ENCODE measurements at regions of chr2 and their contacts with region 1.

Region 1: GRCh38 chr2:217785544-217786045 is 217.2 kb downstream of the TNS1 start:
- DNase-seq: peak; percentile 49
- ATAC-seq: peak; percentile 86
- H3K4me3 ChIP-seq: no peak overlapping the region
- H3K27ac ChIP-seq: no peak overlapping the region
- H3K4me1 ChIP-seq: peaks cover 0 to 3% of the 10 kb centered on the region in 2 experiments; a peak in 2 of 4 replicates
- H3K27me3 ChIP-seq: no peaks in the 10 kb centered on the region
- CTCF ChIP-seq: peak; percentile 92 to 97 (median 93)
- POLR2A ChIP-seq: no peak
- RAD21 ChIP-seq: peak; percentile 99

Region 2: GRCh38 chr2:217482056-217482710 is 303.4 kb before region 1 on chr2:
- CTCF ChIA-PET with region 1: no interaction called
- POLR2A ChIA-PET with region 1: no interaction called
- RAD21 ChIA-PET with region 1: no interaction called
- intact Hi-C with region 1: no loop called
- DNase-seq: no peak
- ATAC-seq: no peak
- H3K4me3 ChIP-seq: no peak overlapping the region
- H3K27ac ChIP-seq: no peak overlapping the region
- H3K4me1 ChIP-seq: no peaks in the 10 kb centered on the region
- H3K27me3 ChIP-seq: peaks cover 29% of the 10 kb centered on the region
- CTCF ChIP-seq: no peak
- POLR2A ChIP-seq: no peak
- RAD21 ChIP-seq: no peak

Region 3: DNA sequence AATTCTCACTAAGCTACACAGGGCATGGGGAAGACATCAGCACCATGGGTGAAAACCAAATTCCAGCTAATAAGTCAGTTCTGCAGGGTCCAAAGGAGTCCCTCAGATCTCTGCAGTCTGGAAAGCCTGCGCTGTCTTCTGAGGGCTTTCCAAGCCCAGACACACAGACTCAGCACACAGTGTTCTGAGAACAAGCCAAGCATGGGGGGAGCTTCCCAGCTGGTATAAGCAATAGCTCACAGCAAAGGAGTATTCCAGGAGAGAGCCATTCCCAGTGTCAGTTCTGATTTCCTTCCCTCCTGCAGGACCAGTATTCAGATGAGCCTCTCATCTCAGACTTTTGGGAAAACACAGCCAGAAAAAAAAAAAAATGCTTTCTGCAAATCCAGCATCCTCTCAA is 153.6 kb before region 1 on chr2:
- CTCF ChIA-PET with region 1: no interaction called
- POLR2A ChIA-PET with region 1: no interaction called
- RAD21 ChIA-PET with region 1: no interaction called
- intact Hi-C with region 1: no loop called
- DNase-seq: no peak
- ATAC-seq: no peak
- H3K4me3 ChIP-seq: no peak overlapping the region
- H3K27ac ChIP-seq: no peak overlapping the region
- H3K4me1 ChIP-seq: no peaks in the 10 kb centered on the region
- H3K27me3 ChIP-seq: peaks cover 56% of the 10 kb centered on the region
- CTCF ChIP-seq: no peak
- POLR2A ChIP-seq: no peak
- RAD21 ChIP-seq: no peak

Region 4: DNA sequence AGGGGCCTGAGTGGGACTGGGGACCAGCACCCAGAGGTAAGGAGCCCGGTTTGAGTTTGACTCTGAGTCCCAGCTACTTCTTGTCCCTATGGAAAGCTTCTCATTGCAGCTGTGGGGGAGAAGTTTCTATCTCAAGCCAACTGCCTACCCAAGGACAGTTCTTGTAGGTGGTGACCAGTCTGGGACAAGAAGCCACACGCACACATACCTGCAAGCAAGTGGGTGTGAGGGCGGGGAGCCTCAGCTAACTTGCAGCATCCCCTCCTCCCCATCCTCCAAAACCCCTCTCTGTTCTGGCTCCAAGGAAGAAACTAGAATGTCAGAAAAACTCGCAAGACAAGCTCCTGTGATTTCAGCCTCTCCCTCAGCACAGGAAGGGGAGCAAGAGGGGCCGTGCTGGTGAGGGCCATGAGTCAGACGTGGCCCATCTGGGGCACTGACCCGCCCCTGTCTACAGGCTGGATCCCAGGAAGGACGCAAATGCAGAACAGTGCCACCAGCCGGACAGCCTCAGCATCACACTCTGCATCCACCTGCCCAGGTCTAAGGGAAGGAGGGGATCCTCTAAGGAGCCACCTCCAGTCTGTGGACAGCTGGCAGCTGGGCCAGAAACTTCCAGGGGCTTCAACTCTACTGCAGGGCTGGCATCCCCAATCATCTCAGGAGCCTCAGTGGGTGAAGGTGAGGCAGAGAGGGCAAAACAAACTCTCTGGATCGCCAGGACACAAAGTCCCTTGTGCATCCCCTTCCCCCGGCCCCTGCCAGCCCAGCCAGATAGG is 113.8 kb after region 1 on chr2:
- CTCF ChIA-PET with region 1: interaction called, 15 read pairs
- POLR2A ChIA-PET with region 1: no interaction called
- RAD21 ChIA-PET with region 1: interaction called, 4 to 7 read pairs
- intact Hi-C with region 1: loop called (anchors 1 kb)
- DNase-seq: peak; percentile 27
- ATAC-seq: peak; percentile 99
- H3K4me3 ChIP-seq: no peak overlapping the region
- H3K27ac ChIP-seq: no peak overlapping the region
- H3K4me1 ChIP-seq: peaks cover 0 to 7% of the 10 kb centered on the region in 2 experiments; a peak in 1 of 4 replicates
- H3K27me3 ChIP-seq: no peaks in the 10 kb centered on the region
- CTCF ChIP-seq: peak; percentile 46 to 88 (median 84); a peak in 5 of 6 replicates
- POLR2A ChIP-seq: no peak
- RAD21 ChIP-seq: peak; percentile 42

Region 5: GRCh38 chr2:217993817-217994463 is 208.3 kb after region 1 on chr2:
- CTCF ChIA-PET with region 1: interaction called, 35 read pairs
- POLR2A ChIA-PET with region 1: interaction called, 3 read pairs
- RAD21 ChIA-PET with region 1: interaction called, 4 read pairs
- intact Hi-C with region 1: loop called (anchors 1 kb)
- DNase-seq: no peak
- ATAC-seq: peak; percentile 96
- H3K4me3 ChIP-seq: no peak overlapping the region
- H3K27ac ChIP-seq: no peak overlapping the region
- H3K4me1 ChIP-seq: peaks cover 14 to 28% of the 10 kb centered on the region in 2 experiments
- H3K27me3 ChIP-seq: no peaks in the 10 kb centered on the region
- CTCF ChIP-seq: peak; percentile 56 to 93 (median 88)
- POLR2A ChIP-seq: no peak
- RAD21 ChIP-seq: no peak

Region 6: DNA sequence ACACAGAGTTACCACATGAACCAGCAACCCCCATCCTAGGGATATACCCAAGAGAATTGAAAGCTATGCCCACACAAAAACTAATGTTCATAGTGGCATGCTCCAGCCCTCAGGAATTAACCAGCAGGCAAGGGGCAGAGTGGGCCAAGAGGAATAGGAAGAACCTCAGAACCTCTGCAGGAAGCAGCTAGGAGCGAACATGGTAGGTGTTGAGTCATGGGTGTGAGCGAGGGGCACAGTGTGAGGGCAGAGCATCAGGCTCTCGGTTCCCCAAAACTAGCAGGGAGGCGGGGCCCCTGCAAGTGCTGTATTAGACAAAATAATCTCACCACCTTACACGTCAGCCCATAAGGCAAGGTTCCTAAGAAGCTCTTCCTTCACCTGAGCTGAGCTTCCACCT is 277.9 kb after region 1 on chr2:
- CTCF ChIA-PET with region 1: interaction called, 53 read pairs
- POLR2A ChIA-PET with region 1: no interaction called
- RAD21 ChIA-PET with region 1: interaction called, 4 to 5 read pairs
- intact Hi-C with region 1: loop called (anchors 1 kb)
- DNase-seq: no peak
- ATAC-seq: no peak
- H3K4me3 ChIP-seq: no peak overlapping the region
- H3K27ac ChIP-seq: no peak overlapping the region
- H3K4me1 ChIP-seq: peaks cover 0 to under 1% of the 10 kb centered on the region in 2 experiments; a peak in 1 of 4 replicates
- H3K27me3 ChIP-seq: peaks cover 1% of the 10 kb centered on the region; the same call in 1 of the 2 replicates
- CTCF ChIP-seq: no peak
- POLR2A ChIP-seq: no peak
- RAD21 ChIP-seq: no peak